ENCODE measurements at regions of chr4 and their contacts with region 1.

Region 1: DNA sequence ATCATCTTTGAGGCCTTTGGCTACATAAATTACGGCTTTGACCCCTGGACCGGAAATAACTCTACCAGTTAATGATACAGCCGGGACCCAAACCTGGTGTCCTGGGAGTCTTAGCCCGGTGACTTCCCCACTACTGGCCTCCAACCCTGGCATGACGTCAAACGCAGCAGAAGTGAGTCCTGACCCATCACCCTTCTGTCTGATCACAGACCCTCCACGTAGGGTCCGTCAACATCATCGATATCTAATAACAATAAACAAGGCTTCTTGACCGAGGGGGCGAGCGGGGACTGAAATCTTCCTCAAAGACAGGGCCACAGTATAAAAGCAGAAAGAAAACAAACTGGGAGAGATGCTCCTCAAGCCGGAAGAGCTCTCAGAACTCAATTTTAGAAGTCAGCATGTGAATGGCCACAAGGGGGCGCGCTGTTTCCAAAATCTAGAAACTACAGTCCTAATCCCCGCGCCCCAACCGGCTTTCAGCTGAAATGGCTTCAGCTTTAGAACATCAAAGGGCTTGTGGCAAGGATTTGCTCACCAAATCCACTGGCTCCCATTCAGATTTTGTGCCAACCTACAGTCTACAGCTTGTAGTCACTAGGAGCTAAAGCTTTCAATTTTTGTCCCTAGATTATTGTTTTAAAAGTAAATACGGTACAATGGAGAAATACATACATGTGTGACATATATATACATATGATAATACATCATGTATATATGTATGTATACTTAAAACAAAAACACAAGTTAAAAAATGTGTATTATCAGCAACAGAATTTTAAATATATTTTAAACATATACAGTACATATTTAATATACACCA is 46.4 kb upstream of the ENPP6 start:
- DNase-seq: peak; percentile 79
- H3K4me3 ChIP-seq: no peak overlapping the region
- H3K27ac ChIP-seq: no peak overlapping the region
- H3K27me3 ChIP-seq: no peaks in the 10 kb centered on the region
- CTCF ChIP-seq: peak; percentile 86

Region 2: GRCh38 chr4:184156163-184156920 is 107.8 kb before region 1 on chr4:
- CTCF ChIA-PET with region 1: no interaction called
- POLR2A ChIA-PET with region 1: no interaction called
- DNase-seq: no peak
- H3K4me3 ChIP-seq: no peak overlapping the region
- H3K27ac ChIP-seq: no peak overlapping the region
- H3K27me3 ChIP-seq: peaks cover 2% of the 10 kb centered on the region
- CTCF ChIP-seq: no peak

Region 3: GRCh38 chr4:184174571-184175488 is 89.3 kb before region 1 on chr4:
- CTCF ChIA-PET with region 1: no interaction called
- POLR2A ChIA-PET with region 1: no interaction called
- DNase-seq: no peak
- H3K4me3 ChIP-seq: no peak overlapping the region
- H3K27ac ChIP-seq: no peak overlapping the region
- H3K27me3 ChIP-seq: peaks cover 4% of the 10 kb centered on the region
- CTCF ChIP-seq: no peak

Region 4: GRCh38 chr4:184250795-184251669 is 13.1 kb before region 1 on chr4:
- CTCF ChIA-PET with region 1: interaction called, 55 read pairs
- POLR2A ChIA-PET with region 1: no interaction called
- DNase-seq: peak; percentile 6
- H3K4me3 ChIP-seq: no peak overlapping the region
- H3K27ac ChIP-seq: no peak overlapping the region
- H3K27me3 ChIP-seq: no peaks in the 10 kb centered on the region
- CTCF ChIP-seq: peak; percentile 62

Region 5: DNA sequence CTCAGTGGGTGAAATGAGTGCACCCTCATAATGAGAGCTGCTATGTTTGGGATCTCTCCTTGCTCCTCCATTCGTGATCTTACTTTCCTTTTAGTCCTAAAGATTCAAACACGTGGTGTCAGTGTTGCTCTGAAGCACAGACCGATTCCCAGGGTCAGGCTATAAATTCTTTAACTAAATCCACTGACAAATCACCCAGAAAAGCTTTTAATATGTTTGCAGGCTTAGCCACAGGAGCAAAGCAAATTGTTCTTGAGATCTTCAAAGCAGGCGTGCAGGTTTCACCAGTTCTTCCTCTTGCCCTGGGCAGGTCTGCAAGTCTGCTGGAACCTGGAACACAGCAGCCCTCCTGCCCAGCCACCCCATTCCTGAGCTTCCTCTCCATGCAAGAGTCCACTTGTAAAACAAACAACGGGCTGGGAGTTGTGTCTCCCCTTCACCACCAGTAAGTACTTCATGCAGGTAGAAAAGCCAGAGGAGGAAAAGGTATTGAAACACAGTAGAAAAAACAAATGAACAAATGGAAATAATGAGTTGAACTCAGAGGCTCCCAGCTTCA is 23.7 kb after region 1 on chr4:
- CTCF ChIA-PET with region 1: interaction called, 26 read pairs
- POLR2A ChIA-PET with region 1: no interaction called
- DNase-seq: peak; percentile 21
- H3K4me3 ChIP-seq: no peak overlapping the region
- H3K27ac ChIP-seq: no peak overlapping the region
- H3K27me3 ChIP-seq: no peaks in the 10 kb centered on the region
- CTCF ChIP-seq: peak; percentile 43

Region 6: DNA sequence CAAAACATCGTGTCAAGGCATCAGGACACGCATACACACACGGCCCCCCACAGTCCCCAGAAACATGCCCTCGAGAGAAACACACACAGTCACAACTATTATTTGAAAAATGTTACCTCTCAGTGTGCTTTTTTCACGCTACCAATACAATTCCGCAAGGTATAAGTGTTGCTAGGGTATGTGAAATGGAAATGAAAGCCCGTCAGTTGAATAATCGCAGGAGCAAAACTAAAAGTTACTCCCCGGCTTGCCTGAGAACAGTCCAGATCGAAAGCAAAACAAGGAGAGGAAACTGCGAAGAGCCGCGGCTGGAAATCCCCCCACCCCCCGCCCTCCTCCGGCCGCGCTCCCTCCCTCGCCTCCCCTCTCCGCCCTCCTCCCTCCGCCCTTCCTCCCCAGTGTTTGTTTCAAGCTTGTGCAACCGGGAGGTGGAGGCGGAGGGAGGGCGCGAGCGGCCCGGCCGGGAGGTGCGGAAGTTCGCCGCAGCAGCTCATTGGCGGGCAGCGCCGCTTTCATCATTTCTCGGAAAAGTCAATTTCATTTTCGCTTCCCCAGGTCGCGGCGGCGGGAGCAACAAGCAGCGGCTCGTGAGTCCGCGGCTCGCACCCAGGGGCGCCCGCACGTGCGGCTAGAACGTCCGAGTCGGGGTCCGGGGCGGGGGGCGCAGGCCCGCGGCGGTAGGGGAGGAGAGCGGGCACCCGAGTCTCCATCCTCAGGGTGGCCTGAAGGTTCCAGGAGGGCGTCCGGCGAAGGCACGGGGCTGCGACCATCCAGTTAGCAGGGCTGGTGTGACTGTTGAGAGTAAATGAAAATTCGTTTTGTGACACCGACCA is 210.4 kb after region 1 on chr4 and contains the start of gene IRF2:
- CTCF ChIA-PET with region 1: interaction called, 12 read pairs
- POLR2A ChIA-PET with region 1: interaction called, 4 read pairs
- DNase-seq: peak; percentile 96
- H3K4me3 ChIP-seq: peak within 1 kb of the TSS; percentile 97
- H3K27ac ChIP-seq: peak within 1 kb of the TSS; percentile 94
- H3K27me3 ChIP-seq: no peaks in the 10 kb centered on the region
- CTCF ChIP-seq: no peak
- polyA plus RNA-seq, gene IRF2: 31.4 and 39.2 TPM in 2 replicates

Region 7: GRCh38 chr4:184514121-184514988 is 250.2 kb after region 1 on chr4:
- CTCF ChIA-PET with region 1: interaction called, 19 read pairs
- POLR2A ChIA-PET with region 1: no interaction called
- DNase-seq: peak; percentile 78
- H3K4me3 ChIP-seq: peak overlapping the region; percentile 52
- H3K27ac ChIP-seq: peak overlapping the region; percentile 85
- H3K27me3 ChIP-seq: no peaks in the 10 kb centered on the region
- CTCF ChIP-seq: no peak

Region 8: GRCh38 chr4:184538023-184538599 is 274.0 kb after region 1 on chr4:
- CTCF ChIA-PET with region 1: interaction called, 55 read pairs
- POLR2A ChIA-PET with region 1: interaction called, 9 read pairs
- DNase-seq: peak; percentile 73
- H3K4me3 ChIP-seq: peak overlapping the region; percentile 65
- H3K27ac ChIP-seq: peak overlapping the region; percentile 81
- H3K27me3 ChIP-seq: no peaks in the 10 kb centered on the region
- CTCF ChIP-seq: peak; percentile 75

Region 9: DNA sequence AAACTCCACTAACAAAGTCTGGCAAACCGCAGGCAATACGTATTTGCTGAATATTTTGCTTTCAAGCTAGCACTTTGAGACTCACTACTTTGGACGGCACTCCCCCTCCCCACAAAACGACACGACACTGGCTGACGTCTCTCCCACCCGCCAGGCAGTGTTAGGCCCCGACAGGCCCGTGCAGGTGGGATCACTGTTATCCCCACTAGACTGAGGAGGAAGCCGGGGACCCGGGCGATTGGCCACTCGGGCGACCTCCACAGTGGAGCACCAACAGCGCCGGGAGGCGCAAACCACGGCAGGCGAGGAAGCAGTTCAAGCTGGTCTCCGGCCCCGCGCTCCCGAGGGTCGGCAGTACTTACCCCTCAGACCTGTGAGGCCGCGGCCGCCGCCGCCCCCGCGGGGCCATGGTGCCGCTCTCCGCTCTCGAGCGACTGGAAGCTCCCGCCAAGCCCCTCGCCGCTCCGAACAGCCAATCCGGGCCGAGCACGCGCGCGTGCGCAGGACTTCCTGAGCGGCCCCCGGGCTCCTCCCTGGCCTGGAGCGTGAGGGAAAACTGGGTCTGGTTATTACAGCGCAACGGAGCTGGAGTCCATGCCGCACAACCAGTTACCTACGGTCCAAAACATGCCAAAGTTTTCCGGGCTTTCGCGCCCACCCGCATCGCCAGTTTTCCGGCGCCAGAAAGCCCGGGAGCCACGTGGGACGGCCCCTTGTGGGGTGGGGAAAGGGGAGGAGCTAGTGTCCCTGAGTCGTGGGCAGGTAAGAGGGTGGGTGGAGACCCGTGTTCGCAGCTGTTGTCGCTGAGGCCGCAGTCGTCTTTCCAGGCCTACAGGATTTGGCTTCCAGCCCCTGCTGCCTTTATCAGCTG is 469.8 kb after region 1 on chr4 and contains the start of gene CENPU:
- CTCF ChIA-PET with region 1: interaction called, 13 read pairs
- POLR2A ChIA-PET with region 1: no interaction called
- DNase-seq: peak; percentile 96
- H3K4me3 ChIP-seq: peak within 1 kb of the TSS; percentile 89
- H3K27ac ChIP-seq: peak within 1 kb of the TSS; percentile 52
- H3K27me3 ChIP-seq: no peaks in the 10 kb centered on the region
- CTCF ChIP-seq: no peak
- polyA plus RNA-seq, gene CENPU: 6.3 and 8.0 TPM in 2 replicates

Measured in AG04450 (cell line).